Activated T-helper 2 cell treated with anti-CD3 and anti-CD28 coated beads, Interferon-gamma antibody, Interleukin-2, Interleukin-4, amounts not matched to agents 10 μg/mL and 5 μg/mL and 100 μg/mL, durations not matched to agents 14 hours and 24 hours and 36 hours (primary cell): ENCODE measurements at regions of chr15 and their contacts with region 1.

Region 1: DNA sequence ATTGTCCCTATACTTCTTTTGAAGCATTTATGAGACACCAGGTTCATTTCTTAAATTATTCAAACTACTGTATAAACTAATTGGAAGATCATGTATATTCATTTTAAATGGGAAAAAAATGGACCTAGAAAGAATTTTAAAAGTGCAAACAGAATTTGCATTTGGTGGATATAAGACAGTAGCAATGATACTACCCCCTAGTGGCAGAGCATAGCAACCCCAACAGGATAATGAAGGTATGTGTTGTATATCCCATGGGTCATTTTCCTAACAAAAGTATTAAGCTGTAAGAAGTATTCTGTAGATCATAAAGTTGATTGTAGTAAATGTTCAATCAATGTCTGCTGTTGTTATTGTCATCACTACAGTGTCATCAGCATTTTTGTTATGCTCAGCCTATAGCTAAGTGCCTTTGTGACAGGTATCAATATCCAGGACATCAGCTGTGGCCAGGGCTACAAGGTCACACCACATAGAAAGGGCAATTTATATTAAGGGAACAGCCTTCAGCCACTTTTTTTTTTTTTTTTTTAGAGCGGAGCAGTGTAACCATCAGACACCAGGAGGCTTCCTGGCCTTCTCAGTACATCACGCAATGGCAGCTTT is 175.8 kb downstream of the FOXB1 start:
- DNase-seq: no peak
- H3K4me3 Mint-ChIP-seq: no peak overlapping the region
- H3K27ac Mint-ChIP-seq: no peak overlapping the region
- H3K4me1 Mint-ChIP-seq: peaks cover 4% of the 10 kb centered on the region
- H3K27me3 Mint-ChIP-seq: peaks cover 38% of the 10 kb centered on the region

Region 2: GRCh38 chr15:59725172-59725486 is 454.8 kb before region 1 on chr15:
- intact Hi-C with region 1: loop called (anchors 5 kb)
- DNase-seq: no peak
- H3K4me3 Mint-ChIP-seq: no peak overlapping the region
- H3K27ac Mint-ChIP-seq: no peak overlapping the region
- H3K4me1 Mint-ChIP-seq: peaks cover 2% of the 10 kb centered on the region
- H3K27me3 Mint-ChIP-seq: peaks cover 20% of the 10 kb centered on the region

Region 3: GRCh38 chr15:59997070-59997701 is 182.7 kb before region 1 on chr15:
- intact Hi-C with region 1: loop called (anchors 2 kb)
- DNase-seq: peak; percentile 70
- H3K4me3 Mint-ChIP-seq: peak overlapping the region; percentile 85
- H3K27ac Mint-ChIP-seq: peak overlapping the region; percentile 86
- H3K4me1 Mint-ChIP-seq: peaks cover 66% of the 10 kb centered on the region
- H3K27me3 Mint-ChIP-seq: peaks cover 89% of the 10 kb centered on the region

Region 4: GRCh38 chr15:60128000-60128376 is 51.9 kb before region 1 on chr15:
- intact Hi-C with region 1: loop called (anchors 5 kb)
- DNase-seq: no peak
- H3K4me3 Mint-ChIP-seq: peak overlapping the region; percentile 71
- H3K27ac Mint-ChIP-seq: peak overlapping the region; percentile 86
- H3K4me1 Mint-ChIP-seq: peaks cover 53% of the 10 kb centered on the region
- H3K27me3 Mint-ChIP-seq: peaks cover 9% of the 10 kb centered on the region

Region 5: GRCh38 chr15:60326824-60327654 is 147.2 kb after region 1 on chr15:
- intact Hi-C with region 1: loop called (anchors 10 kb)
- DNase-seq: no peak
- H3K4me3 Mint-ChIP-seq: no peak overlapping the region
- H3K27ac Mint-ChIP-seq: no peak overlapping the region
- H3K4me1 Mint-ChIP-seq: peaks cover 5% of the 10 kb centered on the region
- H3K27me3 Mint-ChIP-seq: peaks cover 58% of the 10 kb centered on the region